ENCODE measurements at regions of chr16 and their contacts with region 1.

Region 1: GRCh38 chr16:18983565-18984424 is at the start of gene TMC7:
- DNase-seq: peak; percentile 95
- ATAC-seq: peak; percentile 96
- H3K4me3 Mint-ChIP-seq: peak within 1 kb of the TSS; percentile 78
- H3K27ac Mint-ChIP-seq: no peak within 1 kb of the TSS
- H3K4me1 Mint-ChIP-seq: 0 out of 2 replicates have a peak, but pooled peaks cover 3% of the 10 kb centered on the region
- H3K27me3 Mint-ChIP-seq: no peaks in the 10 kb centered on the region
- CTCF ChIP-seq: no peak; the same call in 1 of the 2 replicates
- total RNA-seq, gene TMC7: 2.5 to 3.7 TPM (median 3.6 TPM) in 3 replicates

Region 2: GRCh38 chr16:18801197-18801972 is 182.4 kb before region 1 on chr16 and contains the start of gene ARL6IP1:
- CTCF ChIA-PET with region 1: interaction called, 12 read pairs
- POLR2A ChIA-PET with region 1: interaction called, 3 read pairs
- DNase-seq: peak; percentile 99
- ATAC-seq: peak; percentile 98
- H3K4me3 Mint-ChIP-seq: peak within 1 kb of the TSS; percentile 88
- H3K27ac Mint-ChIP-seq: peak within 1 kb of the TSS; percentile 100
- H3K4me1 Mint-ChIP-seq: peaks cover 51% of the 10 kb centered on the region
- H3K27me3 Mint-ChIP-seq: no peaks in the 10 kb centered on the region
- CTCF ChIP-seq: peak; percentile 71
- total RNA-seq, gene ARL6IP1: 137 to 172 TPM (median 151 TPM) in 3 replicates

Region 3: GRCh38 chr16:18839555-18839954 is 144.2 kb before region 1 on chr16:
- CTCF ChIA-PET with region 1: no interaction called
- POLR2A ChIA-PET with region 1: no interaction called
- DNase-seq: no peak
- ATAC-seq: peak; percentile 66
- H3K4me3 Mint-ChIP-seq: no peak overlapping the region
- H3K27ac Mint-ChIP-seq: peak overlapping the region; percentile 39
- H3K4me1 Mint-ChIP-seq: no peaks in the 10 kb centered on the region
- H3K27me3 Mint-ChIP-seq: no peaks in the 10 kb centered on the region
- CTCF ChIP-seq: no peak

Region 4: DNA sequence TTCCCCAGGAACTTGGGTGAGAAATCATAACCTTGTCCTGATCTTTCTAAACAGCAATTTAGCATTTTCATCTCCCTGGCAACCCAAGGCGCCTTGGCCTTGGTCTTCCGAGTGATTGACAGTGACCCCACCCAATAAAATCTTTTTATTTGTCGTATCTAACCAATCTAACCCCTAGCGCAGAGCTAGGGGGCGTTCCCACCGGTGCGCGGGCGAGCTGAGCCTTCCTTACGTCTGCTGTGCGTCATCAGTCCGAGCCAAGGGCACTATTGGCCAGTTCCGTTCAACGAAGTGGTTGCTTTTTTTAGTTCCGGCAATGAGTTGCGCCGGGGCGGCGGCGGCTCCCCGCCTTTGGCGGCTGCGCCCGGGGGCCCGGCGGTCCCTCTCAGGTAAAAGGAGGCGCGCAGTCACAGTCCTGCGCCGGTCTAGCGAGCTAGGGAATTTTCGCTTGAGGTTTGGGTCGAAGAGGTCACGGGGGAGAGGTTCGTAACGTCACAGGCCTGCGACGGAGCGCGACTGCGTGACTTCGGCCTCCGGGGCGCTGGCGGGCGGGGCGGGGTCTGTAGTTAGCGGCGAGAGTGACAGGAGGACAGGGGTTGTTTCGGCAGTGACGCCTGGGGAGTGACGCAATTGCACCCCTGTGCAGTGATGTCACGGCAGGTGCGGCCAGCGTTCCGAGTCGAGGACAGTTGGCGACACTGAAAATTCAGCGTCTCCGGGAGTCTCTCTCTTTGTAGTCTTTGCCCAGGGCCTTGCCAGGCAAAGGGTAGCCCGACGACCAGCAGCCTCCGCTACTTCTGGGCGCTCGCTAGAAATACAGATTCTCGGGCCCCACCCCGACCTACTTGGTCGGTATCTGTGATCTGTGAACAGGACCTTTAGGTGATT is 83.8 kb after region 1 on chr16 and contains the start of gene COQ7:
- CTCF ChIA-PET with region 1: interaction called, 27 read pairs
- POLR2A ChIA-PET with region 1: no interaction called
- DNase-seq: peak; percentile 97
- ATAC-seq: peak; percentile 97
- H3K4me3 Mint-ChIP-seq: peak within 1 kb of the TSS; percentile 91
- H3K27ac Mint-ChIP-seq: peak within 1 kb of the TSS; percentile 95
- H3K4me1 Mint-ChIP-seq: 0 out of 2 replicates have a peak, but pooled peaks cover 3% of the 10 kb centered on the region
- H3K27me3 Mint-ChIP-seq: peaks cover 2% of the 10 kb centered on the region; the same call in 1 of the 2 replicates
- CTCF ChIP-seq: no peak
- total RNA-seq, gene COQ7: 20.7 to 27.4 TPM (median 22.4 TPM) in 3 replicates

Region 5: DNA sequence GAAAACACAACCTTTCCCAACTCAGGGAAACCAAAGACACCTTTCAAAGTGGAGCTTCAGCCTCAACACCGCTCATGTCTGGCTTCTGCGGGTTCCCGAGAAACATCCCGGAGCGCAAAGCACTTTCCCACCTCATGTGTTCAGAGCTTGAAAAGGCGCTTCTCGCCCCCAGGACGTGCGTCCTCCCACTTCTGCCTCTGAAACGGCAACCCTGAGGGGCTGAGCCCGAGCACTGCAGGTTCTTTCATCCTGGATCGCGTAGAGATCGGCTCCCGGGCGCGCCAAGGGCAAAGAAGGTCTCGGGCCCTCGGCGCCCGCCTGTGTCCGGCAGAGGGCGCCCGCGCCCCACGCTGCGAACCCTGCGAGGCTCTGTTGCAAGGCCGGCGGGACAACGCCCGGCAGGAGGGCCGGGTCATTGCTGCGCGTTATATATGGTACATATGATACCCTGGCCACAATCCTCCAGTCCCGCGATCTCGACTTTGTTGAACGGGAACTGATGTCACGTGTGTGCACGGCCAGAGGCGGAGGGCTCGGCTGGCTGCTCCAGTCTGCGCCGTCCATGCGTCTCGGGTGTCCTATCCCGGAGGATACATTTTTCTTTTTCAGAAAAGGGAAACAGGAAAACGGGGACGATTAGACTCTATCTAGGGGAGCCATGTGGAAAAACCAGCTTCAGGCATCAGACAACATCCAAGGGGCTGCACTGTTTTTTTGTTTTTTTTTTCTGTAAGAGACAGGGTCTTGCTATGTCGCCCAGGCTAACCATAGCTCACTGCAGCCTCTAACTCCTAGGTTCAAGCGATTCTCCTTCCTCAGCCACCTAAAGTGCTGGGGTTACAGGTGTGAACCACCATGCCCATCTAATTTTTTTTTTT is 102.8 kb after region 1 on chr16:
- CTCF ChIA-PET with region 1: interaction called, 13 read pairs
- POLR2A ChIA-PET with region 1: no interaction called
- DNase-seq: peak; percentile 89
- ATAC-seq: peak; percentile 94
- H3K4me3 Mint-ChIP-seq: peak overlapping the region; percentile 67
- H3K27ac Mint-ChIP-seq: no peak overlapping the region
- H3K4me1 Mint-ChIP-seq: peaks cover 4% of the 10 kb centered on the region; the same call in 1 of the 2 replicates
- H3K27me3 Mint-ChIP-seq: peaks cover 18% of the 10 kb centered on the region
- CTCF ChIP-seq: peak; percentile 87

Region 6: DNA sequence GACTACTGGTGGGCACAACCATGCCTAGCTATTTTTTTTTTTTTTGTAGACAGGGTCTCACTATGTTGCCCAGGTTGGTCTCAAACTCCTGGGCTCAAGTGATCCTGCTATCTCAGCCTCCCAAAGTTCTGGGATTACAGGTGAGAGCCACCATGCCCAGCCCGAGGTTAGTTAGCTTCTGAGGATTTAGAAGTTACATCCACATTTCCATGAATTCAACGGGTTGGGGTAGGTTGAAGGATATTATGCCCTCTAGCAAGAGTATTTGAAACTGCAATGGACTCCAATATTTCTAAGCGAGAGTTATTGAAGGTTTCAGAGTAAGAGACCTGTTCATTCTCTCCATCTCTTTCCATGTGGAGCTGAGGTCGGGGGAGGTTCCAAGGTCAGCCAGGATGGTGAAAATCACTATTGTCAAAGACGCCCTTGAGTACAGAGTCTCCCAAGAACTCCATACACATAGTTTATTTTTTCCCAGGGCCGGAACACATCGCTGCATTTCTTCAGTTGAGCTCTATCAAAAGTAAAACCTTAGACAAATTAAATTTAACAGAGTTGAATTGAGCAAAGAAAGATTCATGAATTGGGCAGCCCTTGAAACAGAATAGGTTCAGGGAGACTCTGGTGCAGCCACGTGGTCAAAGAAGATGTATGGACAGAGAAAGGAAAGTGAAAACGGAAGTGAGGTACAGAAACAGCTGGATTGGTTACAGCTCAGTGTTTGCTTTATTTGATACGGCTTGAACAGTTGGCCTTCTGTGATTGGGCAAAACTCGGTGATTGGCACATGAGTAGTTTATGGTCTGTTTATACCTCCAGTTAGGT is 111.0 kb after region 1 on chr16:
- CTCF ChIA-PET with region 1: interaction called, 11 read pairs
- POLR2A ChIA-PET with region 1: no interaction called
- DNase-seq: no peak
- ATAC-seq: no peak
- H3K4me3 Mint-ChIP-seq: no peak overlapping the region
- H3K27ac Mint-ChIP-seq: no peak overlapping the region
- H3K4me1 Mint-ChIP-seq: peaks cover 11% of the 10 kb centered on the region; the same call in 1 of the 2 replicates
- H3K27me3 Mint-ChIP-seq: peaks cover 2% of the 10 kb centered on the region
- CTCF ChIP-seq: no peak